ENCODE measurements at regions of chr18 and their contacts with region 1.

Region 1: DNA sequence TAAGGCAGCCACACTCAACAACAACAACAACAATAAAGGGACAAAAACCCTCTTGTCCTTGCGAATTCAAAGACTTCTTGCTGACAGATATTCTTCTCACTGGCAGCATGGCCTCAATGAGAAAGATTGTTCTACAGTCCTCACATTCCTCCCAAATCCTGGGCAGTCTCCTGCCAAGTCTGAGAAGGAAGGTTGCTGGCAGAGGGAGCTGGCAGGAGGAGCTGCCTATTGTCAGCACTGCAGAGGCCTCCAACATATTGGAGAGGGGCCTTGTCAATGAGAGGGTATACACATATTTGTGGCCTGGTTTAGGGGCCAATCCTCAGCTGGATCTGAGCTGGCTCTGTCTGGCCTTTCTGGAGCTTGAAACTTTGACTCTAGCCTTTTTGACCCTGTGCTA is 63.5 kb downstream of the LAMA3 start:
- DNase-seq: no peak
- ATAC-seq: peak in 1 of 4 donors; percentile 57
- H3K4me3 ChIP-seq: no peak overlapping the region
- H3K27ac ChIP-seq: no peak overlapping the region
- H3K4me1 ChIP-seq: peaks cover 0 to 4% (median 0%) of the 10 kb centered on the region in 12 donors
- H3K27me3 ChIP-seq: no peaks in the 10 kb centered on the region
- CTCF ChIP-seq: no peak
- POLR2A ChIP-seq: no peak

Region 2: DNA sequence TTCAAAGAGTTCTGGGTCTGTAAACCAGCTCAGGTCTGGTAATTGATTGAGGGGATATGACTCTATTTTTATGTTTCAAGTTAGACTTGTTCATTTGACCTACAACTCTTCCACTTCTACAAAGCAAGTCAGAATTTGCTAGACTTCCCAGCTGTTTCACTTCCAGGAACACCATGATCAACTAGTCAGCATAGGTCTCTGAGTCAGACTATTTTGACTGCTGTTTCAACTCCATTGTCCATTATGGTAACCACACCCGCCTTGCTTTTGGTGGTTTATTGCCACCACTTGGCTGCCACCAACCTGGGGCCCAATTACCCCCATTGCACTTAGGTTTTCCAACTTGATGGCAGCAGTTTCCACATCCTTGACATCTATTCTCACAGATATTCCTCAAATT is 53.1 kb after region 1 on chr18:
- intact Hi-C with region 1: loop called in 2 of 10 experiments (anchors 5 to 10 kb)
- DNase-seq: no peak
- ATAC-seq: no peak
- H3K4me3 ChIP-seq: no peak overlapping the region
- H3K27ac ChIP-seq: no peak overlapping the region
- H3K4me1 ChIP-seq: no peaks in the 10 kb centered on the region
- H3K27me3 ChIP-seq: no peaks in the 10 kb centered on the region
- CTCF ChIP-seq: no peak
- POLR2A ChIP-seq: no peak

Measured in heart left ventricle (tissue), 16 donors.